Mammary epithelial cell (primary cell): ENCODE measurements at regions of chr6 and their contacts with region 1.

Region 1: DNA sequence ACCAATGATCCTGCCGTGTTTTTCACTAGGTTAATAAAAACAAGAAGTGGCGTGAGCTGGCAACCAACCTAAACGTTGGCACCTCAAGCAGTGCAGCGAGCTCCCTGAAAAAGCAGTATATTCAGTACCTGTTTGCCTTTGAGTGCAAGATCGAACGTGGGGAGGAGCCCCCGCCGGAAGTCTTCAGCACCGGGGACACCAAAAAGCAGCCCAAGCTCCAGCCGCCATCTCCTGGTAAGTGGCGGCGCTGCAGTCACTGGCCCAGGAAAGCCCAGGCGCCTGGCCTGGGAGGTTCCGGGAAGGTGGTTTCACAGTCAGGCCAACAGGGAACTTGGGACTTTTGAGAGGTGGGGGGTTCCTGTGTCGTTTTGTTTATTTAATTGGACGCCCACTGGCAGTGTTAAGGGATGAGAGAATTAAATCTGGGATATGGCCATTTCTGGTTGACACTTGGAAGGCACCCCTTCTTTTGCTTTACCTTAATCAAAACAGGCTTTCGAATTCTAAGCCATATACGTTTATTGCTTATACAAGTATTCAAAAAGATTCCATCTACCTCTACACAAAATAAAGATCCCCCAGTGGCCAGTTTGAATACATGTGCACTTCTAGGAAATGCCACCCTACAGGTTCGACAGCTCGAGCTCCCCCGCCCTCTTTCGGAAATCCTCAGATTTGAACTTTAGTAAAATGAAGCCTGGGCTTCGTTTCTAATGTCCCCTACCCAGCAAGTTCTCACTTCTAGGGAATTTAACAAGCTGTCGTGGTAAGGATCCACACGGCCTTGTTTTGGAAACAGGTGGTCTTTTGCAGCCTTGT is 138.9 kb downstream of the TMEM242 start:
- DNase-seq: peak; percentile 57
- H3K4me3 ChIP-seq: no peak overlapping the region
- H3K27ac ChIP-seq: no peak overlapping the region
- H3K4me1 ChIP-seq: peaks cover 10% of the 10 kb centered on the region
- H3K27me3 ChIP-seq: no peaks in the 10 kb centered on the region
- CTCF ChIP-seq: peak; percentile 93 to 98

Region 2: GRCh38 chr6:156953479-156954146 is 230.8 kb before region 1 on chr6:
- CTCF ChIA-PET with region 1: no interaction called
- dilution Hi-C with region 1: no loop called
- in situ Hi-C with region 1: no loop called
- intact Hi-C with region 1: loop called (anchors 10 kb)
- DNase-seq: peak; percentile 96
- H3K4me3 ChIP-seq: peak overlapping the region in 1 of 3 experiments; percentile 20
- H3K27ac ChIP-seq: peak overlapping the region; percentile 97
- H3K4me1 ChIP-seq: peaks cover 48% of the 10 kb centered on the region
- H3K27me3 ChIP-seq: no peaks in the 10 kb centered on the region
- CTCF ChIP-seq: peak; percentile 5 to 42

Region 3: GRCh38 chr6:157034436-157035230 is 149.8 kb before region 1 on chr6:
- CTCF ChIA-PET with region 1: interaction called, 4 read pairs
- dilution Hi-C with region 1: no loop called
- in situ Hi-C with region 1: loop called in 1 of 2 experiments (anchors 25 kb)
- intact Hi-C with region 1: loop called (anchors 1 kb)
- DNase-seq: peak; percentile 58
- H3K4me3 ChIP-seq: peak overlapping the region in 2 of 3 experiments; percentile 25 to 71
- H3K27ac ChIP-seq: peak overlapping the region; percentile 93
- H3K4me1 ChIP-seq: peaks cover 47% of the 10 kb centered on the region
- H3K27me3 ChIP-seq: no peaks in the 10 kb centered on the region
- CTCF ChIP-seq: peak; percentile 59 to 76

Region 4: DNA sequence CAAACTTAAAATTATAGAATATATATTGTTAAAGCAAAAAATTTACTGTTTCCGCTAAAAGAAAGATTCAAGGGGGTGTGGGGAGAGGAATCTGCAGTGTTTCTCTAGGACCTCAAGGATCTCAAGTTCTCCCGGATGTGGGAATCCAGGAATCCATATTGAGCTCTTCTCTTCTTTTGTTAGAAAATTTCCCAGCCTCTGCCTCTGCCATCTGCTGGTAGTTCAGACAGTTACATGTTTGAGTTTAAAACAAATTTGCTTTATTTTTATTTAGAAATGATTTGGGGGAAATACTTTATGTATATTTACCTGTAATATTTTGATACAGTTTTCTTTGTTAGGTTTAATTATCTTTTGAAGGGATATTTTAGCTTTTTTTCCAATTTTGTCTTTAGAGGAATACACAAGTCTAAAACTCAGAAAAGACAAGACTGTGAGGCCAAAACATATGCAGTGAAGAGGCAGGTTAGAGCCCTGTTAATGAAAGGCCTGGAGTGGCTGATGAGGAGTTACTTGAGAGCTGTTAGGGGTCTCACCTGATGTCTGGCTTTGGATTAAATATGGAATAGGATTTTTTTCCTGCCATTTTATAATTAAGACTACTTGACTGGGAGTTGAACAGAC is 138.5 kb before region 1 on chr6:
- CTCF ChIA-PET with region 1: interaction called, 3 read pairs
- dilution Hi-C with region 1: no loop called
- in situ Hi-C with region 1: loop called (anchors 10 to 25 kb)
- intact Hi-C with region 1: no loop called
- DNase-seq: peak; percentile 50
- H3K4me3 ChIP-seq: no peak overlapping the region
- H3K27ac ChIP-seq: peak overlapping the region; percentile 22
- H3K4me1 ChIP-seq: no peaks in the 10 kb centered on the region
- H3K27me3 ChIP-seq: no peaks in the 10 kb centered on the region
- CTCF ChIP-seq: peak; percentile 63